ENCODE measurements at regions of chr13 and their contacts with region 1.

Region 1: DNA sequence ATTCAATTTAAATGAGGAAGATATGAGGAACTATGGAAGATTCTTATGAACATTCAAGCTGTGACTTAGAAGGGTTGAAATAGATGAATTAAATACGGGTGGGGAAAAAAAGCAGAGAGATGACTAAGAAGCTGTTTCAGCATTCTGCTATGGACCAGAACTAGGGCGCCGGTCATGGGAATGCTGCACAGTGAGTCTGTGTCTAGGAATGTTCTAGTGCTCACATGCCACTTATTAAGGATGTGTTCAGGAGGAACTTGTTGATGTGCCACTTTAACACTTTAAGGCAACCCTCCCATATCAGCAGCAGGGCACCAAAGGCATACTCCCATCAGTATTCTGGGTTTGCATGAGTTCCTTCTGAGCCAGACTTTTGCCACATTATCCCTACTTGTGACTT is 152.1 kb downstream of the POSTN start:
- DNase-seq: peak; percentile 85
- H3K4me3 ChIP-seq: no peak overlapping the region
- H3K27ac ChIP-seq: no peak overlapping the region
- H3K4me1 ChIP-seq: peaks cover 18% of the 10 kb centered on the region
- H3K27me3 ChIP-seq: no peaks in the 10 kb centered on the region
- CTCF ChIP-seq: no peak

Region 2: DNA sequence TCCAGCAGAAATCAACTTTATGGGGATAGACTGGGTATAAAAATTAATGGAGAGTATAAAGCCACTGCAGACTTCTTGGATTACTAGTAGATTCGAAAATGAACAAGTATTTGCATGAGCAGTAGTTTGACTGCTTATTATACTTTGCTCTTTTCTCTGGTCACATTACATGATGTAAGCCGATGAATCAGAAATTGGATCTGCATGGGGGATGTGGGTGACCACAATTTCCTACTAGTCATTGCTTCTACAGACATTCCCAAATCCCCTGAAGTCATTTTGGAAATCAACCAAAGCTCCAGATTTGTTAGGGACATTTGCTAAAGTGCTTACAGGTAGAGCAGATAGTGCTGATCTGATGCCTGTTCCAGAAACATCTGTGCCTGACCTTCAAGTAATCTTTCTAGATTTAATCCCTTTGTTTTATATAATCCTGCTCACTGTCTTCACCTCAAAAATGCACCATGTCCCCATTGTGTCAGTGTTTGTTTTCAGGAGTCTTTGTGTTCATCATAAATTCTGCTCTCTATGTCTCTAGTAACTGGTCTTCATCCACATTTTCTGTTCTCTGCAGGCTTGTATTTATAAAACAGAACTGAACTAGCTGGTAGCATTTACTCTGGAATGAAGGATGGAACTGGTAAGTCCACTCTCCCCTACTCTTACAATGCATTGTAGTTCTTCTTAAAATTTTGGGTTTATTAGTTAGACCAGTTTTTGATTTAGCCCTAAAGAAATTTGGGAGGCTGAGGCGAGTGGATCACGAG is 139.5 kb before region 1 on chr13:
- CTCF ChIA-PET with region 1: no interaction called
- dilution Hi-C with region 1: no loop called
- in situ Hi-C with region 1: no loop called
- intact Hi-C with region 1: loop called (anchors 10 kb)
- DNase-seq: peak; percentile 94
- H3K4me3 ChIP-seq: no peak overlapping the region
- H3K27ac ChIP-seq: peak overlapping the region; percentile 19
- H3K4me1 ChIP-seq: peaks cover 7% of the 10 kb centered on the region
- H3K27me3 ChIP-seq: no peaks in the 10 kb centered on the region
- CTCF ChIP-seq: no peak

Region 3: GRCh38 chr13:37602747-37603381 is 156.4 kb after region 1 on chr13:
- CTCF ChIA-PET with region 1: no interaction called
- dilution Hi-C with region 1: no loop called
- in situ Hi-C with region 1: no loop called
- intact Hi-C with region 1: loop called (anchors 5 kb)
- DNase-seq: no peak
- H3K4me3 ChIP-seq: no peak overlapping the region
- H3K27ac ChIP-seq: no peak overlapping the region
- H3K4me1 ChIP-seq: peaks cover 3% of the 10 kb centered on the region
- H3K27me3 ChIP-seq: no peaks in the 10 kb centered on the region
- CTCF ChIP-seq: peak; percentile 32 to 63

Region 4: GRCh38 chr13:37701972-37702371 is 255.5 kb after region 1 on chr13:
- CTCF ChIA-PET with region 1: no interaction called
- dilution Hi-C with region 1: no loop called
- in situ Hi-C with region 1: no loop called
- intact Hi-C with region 1: no loop called
- DNase-seq: peak; percentile 46
- H3K4me3 ChIP-seq: no peak overlapping the region
- H3K27ac ChIP-seq: no peak overlapping the region
- H3K4me1 ChIP-seq: no peaks in the 10 kb centered on the region
- H3K27me3 ChIP-seq: no peaks in the 10 kb centered on the region
- CTCF ChIP-seq: no peak